ENCODE measurements at regions of chr17 and their contacts with region 1.

Region 1: GRCh38 chr17:58447039-58447975 is 30.0 kb upstream of the RNF43 start:
- DNase-seq: peak; percentile 88 to 89
- H3K4me3 ChIP-seq: no peak overlapping the region
- H3K4me3 Mint-ChIP-seq: no peak overlapping the region
- H3K27ac Mint-ChIP-seq: peak overlapping the region; percentile 69
- H3K4me1 ChIP-seq: no peaks in the 10 kb centered on the region
- H3K4me1 Mint-ChIP-seq: peaks cover 8% of the 10 kb centered on the region
- H3K27me3 ChIP-seq: no peaks in the 10 kb centered on the region
- H3K27me3 Mint-ChIP-seq: no peaks in the 10 kb centered on the region
- CTCF ChIP-seq: peak; percentile 81 to 92

Region 2: DNA sequence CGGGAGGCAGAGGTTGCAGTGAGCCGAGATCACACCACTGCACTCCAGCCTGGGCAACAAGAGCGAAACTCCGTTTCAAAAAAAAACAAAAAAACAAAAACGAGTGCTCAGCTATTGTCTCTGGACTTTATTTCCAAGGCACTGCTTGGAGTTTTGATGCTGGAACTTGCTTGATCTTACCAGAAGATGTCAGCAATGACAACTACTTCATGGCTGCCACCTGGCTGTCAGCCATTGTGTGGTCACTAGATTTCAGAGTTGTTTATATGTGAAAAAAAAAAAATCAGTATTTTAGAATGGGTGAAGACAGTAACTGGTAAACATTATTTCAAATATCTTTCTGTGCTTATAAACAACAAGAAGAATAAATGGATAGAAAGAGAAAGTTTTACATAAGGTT is 325.4 kb before region 1 on chr17:
- CTCF ChIA-PET with region 1: no interaction called
- POLR2A ChIA-PET with region 1: no interaction called
- intact Hi-C with region 1: loop called (anchors 1 kb)
- DNase-seq: peak; percentile 46 to 56
- H3K4me3 ChIP-seq: no peak overlapping the region
- H3K4me3 Mint-ChIP-seq: no peak overlapping the region
- H3K27ac Mint-ChIP-seq: no peak overlapping the region
- H3K4me1 ChIP-seq: no peaks in the 10 kb centered on the region
- H3K4me1 Mint-ChIP-seq: no peaks in the 10 kb centered on the region
- H3K27me3 ChIP-seq: no peaks in the 10 kb centered on the region
- H3K27me3 Mint-ChIP-seq: peaks cover 17% of the 10 kb centered on the region
- CTCF ChIP-seq: peak; percentile 53 to 75

Region 3: GRCh38 chr17:58200017-58200633 is 247.2 kb before region 1 on chr17:
- CTCF ChIA-PET with region 1: interaction called, 3 read pairs
- POLR2A ChIA-PET with region 1: no interaction called
- intact Hi-C with region 1: loop called (anchors 1 kb)
- DNase-seq: peak; percentile 71 to 73
- H3K4me3 ChIP-seq: no peak overlapping the region
- H3K4me3 Mint-ChIP-seq: no peak overlapping the region
- H3K27ac Mint-ChIP-seq: no peak overlapping the region
- H3K4me1 ChIP-seq: no peaks in the 10 kb centered on the region
- H3K4me1 Mint-ChIP-seq: peaks cover 8% of the 10 kb centered on the region
- H3K27me3 ChIP-seq: no peaks in the 10 kb centered on the region
- H3K27me3 Mint-ChIP-seq: peaks cover 4% of the 10 kb centered on the region
- CTCF ChIP-seq: peak; percentile 51 to 53

Region 4: GRCh38 chr17:58249270-58250133 is 197.8 kb before region 1 on chr17:
- CTCF ChIA-PET with region 1: no interaction called
- POLR2A ChIA-PET with region 1: no interaction called
- intact Hi-C with region 1: loop called (anchors 1 kb)
- DNase-seq: peak; percentile 60 to 86
- H3K4me3 ChIP-seq: peak overlapping the region; percentile 37
- H3K4me3 Mint-ChIP-seq: peak overlapping the region; percentile 76
- H3K27ac Mint-ChIP-seq: no peak overlapping the region
- H3K4me1 ChIP-seq: peaks cover 3% of the 10 kb centered on the region
- H3K4me1 Mint-ChIP-seq: peaks cover 12% of the 10 kb centered on the region
- H3K27me3 ChIP-seq: no peaks in the 10 kb centered on the region
- H3K27me3 Mint-ChIP-seq: peaks cover 5% of the 10 kb centered on the region
- CTCF ChIP-seq: peak; percentile 88 to 96

Region 5: DNA sequence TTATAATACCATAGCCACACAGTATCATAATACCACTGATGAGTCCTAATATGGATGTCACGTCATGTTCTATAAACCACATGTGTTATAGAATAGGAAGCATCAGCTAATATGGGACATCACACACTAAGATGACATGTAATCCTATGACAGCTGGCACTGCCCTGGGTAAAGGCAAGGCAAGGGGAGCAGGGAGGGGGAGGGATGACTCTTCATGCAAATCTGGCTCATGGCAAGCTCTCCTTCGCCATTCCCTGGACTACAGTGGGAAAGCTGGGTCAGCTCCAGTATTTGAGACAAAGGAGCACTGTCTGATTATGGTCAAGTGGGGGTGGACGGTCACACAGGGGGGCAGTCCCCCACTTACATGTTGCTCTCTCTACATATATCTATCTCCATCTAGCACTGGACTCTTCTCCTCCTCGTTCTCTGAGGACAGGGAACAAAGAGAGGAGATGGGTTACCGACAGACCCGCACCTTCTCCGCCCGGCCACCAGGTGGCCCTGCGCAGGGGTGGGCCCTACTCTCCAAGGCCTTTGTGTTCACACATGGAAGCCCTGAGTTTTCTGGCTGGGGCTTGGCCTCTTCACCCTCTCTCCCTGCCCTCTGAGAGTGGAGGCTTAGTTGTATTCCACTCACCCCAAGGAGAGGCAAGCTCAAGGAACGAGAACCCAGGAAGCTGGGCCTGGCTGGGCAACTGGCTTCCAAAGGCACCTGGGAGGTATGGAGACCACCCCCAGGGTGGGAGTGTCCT is 143.2 kb before region 1 on chr17:
- CTCF ChIA-PET with region 1: interaction called, 7 read pairs
- POLR2A ChIA-PET with region 1: no interaction called
- intact Hi-C with region 1: loop called (anchors 1 kb)
- DNase-seq: peak; percentile 69 to 76
- H3K4me3 ChIP-seq: no peak overlapping the region
- H3K4me3 Mint-ChIP-seq: no peak overlapping the region
- H3K27ac Mint-ChIP-seq: no peak overlapping the region
- H3K4me1 ChIP-seq: no peaks in the 10 kb centered on the region
- H3K4me1 Mint-ChIP-seq: peaks cover 5% of the 10 kb centered on the region
- H3K27me3 ChIP-seq: no peaks in the 10 kb centered on the region
- H3K27me3 Mint-ChIP-seq: no peaks in the 10 kb centered on the region
- CTCF ChIP-seq: peak; percentile 85 to 91